RWPE1 (cell line): ENCODE measurements at regions of chr2 and their contacts with region 1.

Region 1: GRCh38 chr2:48749291-48750127 is 6.0 kb downstream of the LHCGR start:
- DNase-seq: no peak
- H3K27ac ChIP-seq: no peak overlapping the region
- CTCF ChIP-seq: no peak

Region 2: DNA sequence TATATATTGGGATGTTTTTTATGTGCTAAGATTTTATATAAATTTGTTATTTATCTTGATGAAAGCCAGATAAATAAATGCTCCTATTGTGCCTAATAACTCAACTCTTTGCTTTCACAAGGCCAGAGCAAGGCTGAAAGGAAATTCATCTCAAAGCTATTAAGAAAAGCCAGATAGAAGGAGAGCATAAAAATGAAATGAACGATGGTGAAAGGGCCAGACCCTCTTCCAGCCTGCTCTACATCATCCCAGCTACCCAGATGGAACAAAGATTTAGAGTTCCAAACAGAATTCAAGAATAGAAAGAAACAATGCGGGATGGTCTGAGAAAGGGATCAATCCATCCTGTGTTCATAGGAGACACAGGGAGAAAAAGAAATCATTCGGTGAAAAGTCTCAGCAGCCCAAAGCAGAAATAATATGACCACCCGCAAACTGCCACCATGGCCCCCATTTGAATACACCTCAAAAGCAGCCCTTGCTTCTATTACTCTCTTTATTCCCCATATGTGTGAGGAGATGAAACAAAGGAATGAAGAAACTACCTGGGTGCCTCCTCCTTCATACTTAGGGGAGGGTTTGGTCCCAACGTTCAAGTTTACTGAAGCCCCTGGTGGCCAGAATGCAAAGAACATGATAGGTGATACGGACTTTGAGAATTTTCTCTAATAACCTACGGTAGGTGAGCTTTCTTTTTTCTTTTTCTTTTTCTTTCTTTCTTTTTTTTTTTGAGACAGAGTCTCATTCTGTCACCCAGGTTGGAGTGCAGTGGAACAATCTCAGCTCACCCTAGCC is 733.1 kb before region 1 on chr2:
- CTCF ChIA-PET with region 1: no interaction called
- POLR2A ChIA-PET with region 1: interaction called, 11 read pairs
- DNase-seq: peak; percentile 13
- H3K27ac ChIP-seq: no peak overlapping the region
- CTCF ChIP-seq: no peak

Region 3: GRCh38 chr2:48738806-48739205 is 10.7 kb before region 1 on chr2:
- CTCF ChIA-PET with region 1: interaction called, 10 read pairs
- POLR2A ChIA-PET with region 1: no interaction called
- DNase-seq: peak; percentile 14
- H3K27ac ChIP-seq: no peak overlapping the region
- CTCF ChIP-seq: no peak